Endothelial cell of umbilical vein (primary cell): ENCODE measurements at regions of chr7 and their contacts with region 1.

Region 1: GRCh38 chr7:101138213-101138870 is 11.4 kb downstream of the SERPINE1 start:
- DNase-seq: peak; percentile 99
- H3K4me3 ChIP-seq: no peak overlapping the region
- H3K27ac ChIP-seq: peak overlapping the region; percentile 30
- H3K4me1 ChIP-seq: peaks cover 39% of the 10 kb centered on the region
- H3K27me3 ChIP-seq: no peaks in the 10 kb centered on the region
- CTCF ChIP-seq: peak; percentile 64 to 75
- POLR2A ChIP-seq: peak; percentile 82

Region 2: DNA sequence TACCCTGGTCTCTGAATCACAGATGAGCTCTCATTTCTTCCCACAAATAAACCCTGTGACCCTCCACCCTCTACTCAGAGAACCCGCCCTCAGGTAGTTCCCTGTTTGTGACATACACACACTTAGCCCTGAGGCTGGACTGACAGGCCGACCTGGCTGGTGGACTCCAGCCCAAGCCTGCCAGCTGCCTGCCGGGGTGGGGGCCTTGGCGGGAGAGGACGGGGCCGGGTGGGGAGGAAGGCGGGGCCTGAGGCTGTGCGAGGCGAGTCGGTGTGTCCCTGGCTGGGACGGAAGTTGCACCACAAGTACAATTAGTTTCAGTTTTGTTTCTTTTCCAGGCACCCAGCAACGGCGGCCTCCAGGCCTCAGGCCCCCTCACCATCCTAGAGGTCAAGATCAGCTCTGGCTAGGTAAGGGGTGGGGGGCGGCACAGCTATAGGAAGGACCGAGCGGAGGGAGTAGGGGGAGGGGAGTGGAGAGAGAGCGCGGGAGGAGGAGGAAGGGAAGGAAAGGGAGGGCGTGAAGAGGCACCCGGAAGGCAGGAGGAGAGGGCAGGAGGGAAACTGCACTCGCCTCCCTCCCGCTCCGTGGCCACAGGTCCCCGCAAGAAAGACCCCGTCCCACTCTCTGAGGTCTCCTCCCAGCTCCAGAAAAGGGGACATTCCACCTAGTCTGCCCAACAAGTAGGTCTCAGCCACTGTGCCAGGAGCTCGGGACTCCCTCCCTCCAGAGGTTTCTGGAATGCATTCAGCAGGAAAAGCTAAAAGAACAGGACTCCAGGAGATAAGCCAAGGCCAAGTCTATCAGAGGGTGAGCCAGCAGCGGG is 53.0 kb before region 1 on chr7 and contains the start of gene TRIM56:
- CTCF ChIA-PET with region 1: interaction called, 7 read pairs
- POLR2A ChIA-PET with region 1: interaction called, 12 read pairs
- dilution Hi-C with region 1: no loop called
- intact Hi-C with region 1: loop called (anchors 1 kb)
- DNase-seq: peak; percentile 86
- H3K4me3 ChIP-seq: peak within 1 kb of the TSS; percentile 63 to 71 (median 66)
- H3K27ac ChIP-seq: peak within 1 kb of the TSS; percentile 77
- H3K4me1 ChIP-seq: peaks cover 12% of the 10 kb centered on the region
- H3K27me3 ChIP-seq: no peaks in the 10 kb centered on the region
- CTCF ChIP-seq: no peak
- POLR2A ChIP-seq: no peak
- total RNA-seq, gene TRIM56: 21.8 and 25.1 TPM in 2 replicates

Region 3: DNA sequence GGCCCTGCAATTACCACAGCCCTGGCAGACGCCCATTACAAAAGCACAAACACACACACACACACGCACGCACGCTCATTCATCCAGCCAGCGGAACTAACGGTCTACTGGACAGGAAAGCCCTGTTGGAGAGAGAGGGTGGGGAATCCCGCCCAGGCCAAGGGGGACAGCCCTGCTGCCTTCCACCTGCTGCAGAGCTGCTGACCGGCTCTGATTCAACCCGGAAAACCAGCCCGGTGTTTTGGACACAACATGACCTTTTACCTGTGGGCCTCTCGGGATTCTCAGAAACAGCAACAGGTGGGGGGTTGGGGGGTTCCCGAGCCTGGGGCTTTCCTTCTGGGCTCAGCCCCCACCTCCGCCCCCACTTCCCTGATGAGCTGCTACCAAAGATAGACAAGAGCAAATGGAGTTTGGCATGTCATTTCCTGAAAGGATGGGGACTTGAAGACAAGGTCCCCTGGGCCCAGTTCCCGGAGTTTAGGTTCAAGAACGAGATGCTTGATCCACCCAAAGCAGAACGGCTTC is 29.9 kb before region 1 on chr7:
- CTCF ChIA-PET with region 1: interaction called, 6 read pairs
- POLR2A ChIA-PET with region 1: interaction called, 10 read pairs
- dilution Hi-C with region 1: no loop called
- intact Hi-C with region 1: loop called (anchors 1 kb)
- DNase-seq: peak; percentile 95
- H3K4me3 ChIP-seq: no peak overlapping the region
- H3K27ac ChIP-seq: peak overlapping the region; percentile 94
- H3K4me1 ChIP-seq: peaks cover 57% of the 10 kb centered on the region
- H3K27me3 ChIP-seq: no peaks in the 10 kb centered on the region
- CTCF ChIP-seq: no peak
- POLR2A ChIP-seq: peak; percentile 60

Region 4: DNA sequence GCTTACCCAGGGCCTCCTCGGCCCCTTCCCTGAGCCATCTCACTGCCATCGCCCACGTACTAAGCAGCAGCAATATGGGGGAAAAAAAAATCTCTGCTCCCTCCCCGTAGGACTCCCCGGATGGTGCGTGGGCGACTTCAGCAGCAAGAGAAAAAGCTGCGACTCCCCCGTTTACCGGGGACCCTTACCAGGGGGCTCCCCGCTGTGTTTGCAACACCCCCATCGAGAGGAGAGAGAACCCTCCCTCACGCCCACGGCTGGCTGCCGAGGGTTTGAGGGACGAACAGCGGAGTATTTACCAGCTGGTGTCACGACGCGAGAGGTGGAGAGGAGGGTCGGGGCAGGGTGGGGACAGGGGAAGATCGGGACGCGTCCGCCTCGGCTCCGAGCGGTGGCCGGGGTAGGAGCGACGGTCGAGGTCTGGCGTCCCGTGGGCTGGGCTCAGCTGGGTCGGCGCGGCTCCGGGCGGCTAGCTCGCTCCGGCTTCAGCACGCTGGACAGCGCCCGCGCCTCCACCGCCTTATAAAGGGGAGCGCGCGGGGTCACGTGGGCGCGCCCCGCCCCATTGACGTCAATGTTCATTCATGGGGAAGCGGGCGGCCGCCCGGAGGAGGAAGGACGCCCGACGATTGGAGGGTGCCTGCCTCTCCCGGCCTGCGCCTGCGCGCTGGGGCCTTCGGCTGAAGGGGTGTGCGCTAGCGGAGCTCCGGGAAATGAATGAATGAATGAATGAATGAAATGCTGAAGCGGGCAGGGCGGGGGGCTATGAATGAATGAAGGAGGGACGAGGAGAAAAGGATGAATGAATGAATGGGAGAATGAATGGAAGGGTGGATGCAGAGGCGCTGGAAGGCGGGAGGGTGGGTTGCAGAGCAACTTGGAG is 27.0 kb after region 1 on chr7 and contains the start of gene VGF:
- CTCF ChIA-PET with region 1: interaction called, 49 read pairs
- POLR2A ChIA-PET with region 1: no interaction called
- dilution Hi-C with region 1: no loop called
- intact Hi-C with region 1: no loop called
- DNase-seq: peak; percentile 86
- H3K4me3 ChIP-seq: no peak within 1 kb of the TSS
- H3K27ac ChIP-seq: no peak within 1 kb of the TSS
- H3K4me1 ChIP-seq: peaks cover 16% of the 10 kb centered on the region
- H3K27me3 ChIP-seq: peaks cover 52 to 58% of the 10 kb centered on the region in 2 experiments
- CTCF ChIP-seq: no peak
- POLR2A ChIP-seq: no peak
- total RNA-seq, gene VGF: not detected in 2 replicates

Region 5: DNA sequence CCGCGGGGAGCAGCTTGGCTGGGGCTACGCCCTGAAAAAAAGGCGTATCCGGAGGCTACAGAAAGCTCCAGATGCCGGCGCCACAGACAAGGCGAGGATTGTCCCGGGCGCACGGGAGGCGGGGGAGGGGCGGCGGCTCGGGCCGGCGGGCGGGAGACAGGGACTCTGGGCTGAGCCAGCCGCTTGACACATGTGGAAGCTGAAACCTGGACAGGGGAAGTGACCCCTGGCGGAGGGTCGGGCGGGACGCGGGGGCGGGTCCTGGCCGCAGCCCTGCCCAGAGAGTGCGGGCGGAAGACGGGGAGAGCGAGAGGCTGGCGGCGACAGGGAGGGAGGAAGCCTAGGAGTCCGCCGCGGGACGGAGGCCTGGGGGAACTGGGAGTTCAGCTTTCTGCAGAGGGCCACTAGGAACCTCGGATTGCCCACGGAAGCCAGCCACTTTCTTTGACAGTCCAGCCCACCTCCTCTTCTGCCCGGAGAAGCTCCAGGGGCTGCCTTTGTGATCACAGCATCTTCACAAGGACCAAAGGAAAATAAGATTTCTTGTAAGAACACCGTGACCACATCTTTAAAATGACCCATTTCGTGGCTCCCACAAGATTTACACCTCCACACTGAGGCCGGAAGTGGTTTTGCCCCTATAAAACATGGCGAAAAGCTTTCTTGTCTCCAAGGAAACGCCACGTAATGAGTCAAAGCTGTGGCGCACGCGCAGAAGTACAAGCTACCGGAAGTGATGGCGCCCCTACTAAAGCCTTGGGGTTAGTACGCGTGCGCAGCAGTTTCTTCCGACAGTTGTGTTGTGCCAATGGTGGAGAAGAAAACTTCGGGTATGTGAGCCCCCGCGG is 79.3 kb after region 1 on chr7 and contains the starts of genes PLOD3 and ZNHIT1:
- CTCF ChIA-PET with region 1: interaction called, 24 read pairs
- POLR2A ChIA-PET with region 1: no interaction called
- dilution Hi-C with region 1: no loop called
- intact Hi-C with region 1: no loop called
- DNase-seq: peak; percentile 98
- H3K4me3 ChIP-seq: peak within 1 kb of the TSS; percentile 75 to 84 (median 78)
- H3K27ac ChIP-seq: peak within 1 kb of the TSS; percentile 79
- H3K4me1 ChIP-seq: peaks cover 13% of the 10 kb centered on the region
- H3K27me3 ChIP-seq: no peaks in the 10 kb centered on the region
- CTCF ChIP-seq: peak in 1 of 2 donors; percentile 10
- POLR2A ChIP-seq: peak; percentile 87
- total RNA-seq, gene PLOD3: 161 and 170 TPM in 2 replicates
- total RNA-seq, gene ZNHIT1: 89.9 and 90.5 TPM in 2 replicates

Region 6: DNA sequence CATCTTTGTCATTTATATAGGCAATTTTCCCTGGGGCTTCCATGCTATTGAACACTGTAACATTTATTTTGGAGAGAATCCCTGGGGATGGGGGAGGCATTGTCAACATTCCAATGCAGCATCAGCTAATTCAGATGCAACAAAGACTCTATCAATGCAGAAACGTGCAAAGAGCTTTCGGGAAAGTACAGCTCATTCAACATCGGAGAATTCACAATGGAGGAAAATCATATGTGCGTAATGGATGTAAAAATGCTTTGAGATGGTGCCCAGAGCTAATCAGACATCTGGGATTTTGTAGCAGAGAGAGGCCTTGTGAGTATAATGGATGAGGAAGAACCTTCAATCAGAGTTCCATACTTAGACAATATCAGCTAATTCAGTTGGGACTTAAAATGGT is 134.9 kb after region 1 on chr7:
- CTCF ChIA-PET with region 1: interaction called, 29 read pairs
- POLR2A ChIA-PET with region 1: no interaction called
- dilution Hi-C with region 1: no loop called
- intact Hi-C with region 1: no loop called
- DNase-seq: no peak
- H3K4me3 ChIP-seq: no peak overlapping the region
- H3K27ac ChIP-seq: no peak overlapping the region
- H3K4me1 ChIP-seq: no peaks in the 10 kb centered on the region
- H3K27me3 ChIP-seq: peaks cover 0 to 2% of the 10 kb centered on the region in 2 experiments
- CTCF ChIP-seq: no peak
- POLR2A ChIP-seq: no peak

Region 7: DNA sequence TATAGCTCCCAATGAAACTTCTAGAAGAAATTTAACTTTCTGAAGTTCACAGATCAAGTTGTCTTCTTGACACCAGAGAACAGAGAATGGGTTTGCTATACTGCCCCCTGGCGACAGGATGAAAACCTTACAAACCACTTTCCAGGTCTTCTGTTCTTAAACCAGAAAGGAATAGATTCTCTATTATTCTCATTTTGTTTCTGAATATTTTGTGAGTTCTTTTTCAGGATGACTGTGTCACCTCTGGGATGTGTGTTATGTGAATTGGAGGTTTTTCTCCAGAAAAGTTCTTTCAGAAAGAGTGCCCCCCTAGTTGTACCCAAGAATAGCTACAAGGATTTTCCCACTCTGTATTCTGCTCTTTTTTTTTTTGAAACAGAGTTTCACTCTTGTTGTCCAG is 177.0 kb after region 1 on chr7:
- CTCF ChIA-PET with region 1: interaction called, 12 read pairs
- POLR2A ChIA-PET with region 1: no interaction called
- dilution Hi-C with region 1: no loop called
- intact Hi-C with region 1: no loop called
- DNase-seq: peak; percentile 37
- H3K4me3 ChIP-seq: no peak overlapping the region
- H3K27ac ChIP-seq: no peak overlapping the region
- H3K4me1 ChIP-seq: no peaks in the 10 kb centered on the region
- H3K27me3 ChIP-seq: no peaks in the 10 kb centered on the region
- CTCF ChIP-seq: peak; percentile 64 to 66
- POLR2A ChIP-seq: no peak